ENCODE measurements at regions of chr7 and their contacts with region 1.

Region 1: GRCh38 chr7:151759591-151760042 is 117.3 kb downstream of the PRKAG2 start:
- DNase-seq: peak; percentile 92
- H3K4me3 ChIP-seq: no peak overlapping the region
- H3K27ac ChIP-seq: no peak overlapping the region
- H3K4me1 ChIP-seq: peaks cover 20 to 21% of the 10 kb centered on the region in 2 experiments; a peak in 3 of 4 replicates
- H3K27me3 ChIP-seq: peaks cover 13% of the 10 kb centered on the region; the same call in 1 of the 2 replicates
- CTCF ChIP-seq: peak; percentile 99
- EP300 ChIP-seq: no peak
- RAD21 ChIP-seq: peak; percentile 99

Region 2: DNA sequence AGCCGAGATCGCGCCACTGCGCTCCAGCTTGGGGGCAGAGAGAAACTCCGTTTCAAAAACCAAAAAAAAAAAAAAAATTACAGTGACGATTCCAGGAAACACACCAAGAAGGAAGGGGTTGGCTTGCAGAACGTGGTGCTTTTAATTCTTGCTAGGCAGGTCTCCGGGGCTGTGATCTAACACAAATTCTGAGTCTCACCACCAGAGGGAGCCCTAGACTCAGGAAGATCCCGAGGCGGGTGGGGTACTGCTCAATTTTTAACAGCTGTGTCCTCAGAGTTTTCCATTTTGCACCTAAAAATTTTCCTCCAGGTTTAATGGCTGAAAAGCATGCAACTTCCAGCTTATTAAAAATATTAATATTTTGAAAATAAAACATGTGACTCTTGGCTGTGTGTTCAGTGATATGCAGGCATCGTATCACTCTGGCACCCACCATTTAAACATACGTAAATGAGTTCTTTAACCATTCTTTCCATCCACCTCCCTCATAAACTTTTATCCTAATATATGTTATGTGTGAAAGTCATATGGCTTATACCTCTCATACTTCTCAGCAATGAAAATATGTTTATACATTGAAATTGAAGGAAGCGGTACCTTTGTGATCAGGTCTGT is 444.5 kb before region 1 on chr7:
- CTCF ChIA-PET with region 1: interaction called, 28 read pairs
- POLR2A ChIA-PET with region 1: no interaction called
- DNase-seq: peak; percentile 90
- H3K4me3 ChIP-seq: no peak overlapping the region
- H3K27ac ChIP-seq: no peak overlapping the region
- H3K4me1 ChIP-seq: no peaks in the 10 kb centered on the region
- H3K27me3 ChIP-seq: no peaks in the 10 kb centered on the region
- CTCF ChIP-seq: peak; percentile 97
- EP300 ChIP-seq: no peak
- RAD21 ChIP-seq: peak; percentile 90

Region 3: GRCh38 chr7:151459726-151460473 is 299.7 kb before region 1 on chr7:
- CTCF ChIA-PET with region 1: interaction called, 11 read pairs
- POLR2A ChIA-PET with region 1: no interaction called
- DNase-seq: peak; percentile 77
- H3K4me3 ChIP-seq: peak overlapping the region; percentile 23 to 42; a peak in 3 of 4 replicates
- H3K27ac ChIP-seq: peak overlapping the region; percentile 44 to 54; a peak in 3 of 4 replicates
- H3K4me1 ChIP-seq: peaks cover 0 to 14% of the 10 kb centered on the region in 2 experiments; a peak in 1 of 4 replicates
- H3K27me3 ChIP-seq: no peaks in the 10 kb centered on the region
- CTCF ChIP-seq: peak; percentile 44
- EP300 ChIP-seq: peak in 1 of 2 experiments; percentile 31; a peak in 1 of 4 replicates
- RAD21 ChIP-seq: peak; percentile 53

Region 4: GRCh38 chr7:151626422-151627115 is 133.0 kb before region 1 on chr7:
- CTCF ChIA-PET with region 1: interaction called, 203 read pairs
- POLR2A ChIA-PET with region 1: no interaction called
- DNase-seq: peak; percentile 56
- H3K4me3 ChIP-seq: no peak overlapping the region
- H3K27ac ChIP-seq: no peak overlapping the region
- H3K4me1 ChIP-seq: peaks cover 9 to 15% of the 10 kb centered on the region in 2 experiments; a peak in 2 of 4 replicates
- H3K27me3 ChIP-seq: no peaks in the 10 kb centered on the region
- CTCF ChIP-seq: peak; percentile 62
- EP300 ChIP-seq: no peak
- RAD21 ChIP-seq: peak; percentile 76

Region 5: GRCh38 chr7:151665368-151665767 is 94.2 kb before region 1 on chr7:
- CTCF ChIA-PET with region 1: interaction called, 19 read pairs
- POLR2A ChIA-PET with region 1: no interaction called
- DNase-seq: no peak
- H3K4me3 ChIP-seq: no peak overlapping the region
- H3K27ac ChIP-seq: peak overlapping the region in 1 of 2 experiments; percentile 26; a peak in 1 of 4 replicates
- H3K4me1 ChIP-seq: peaks cover 0 to 4% of the 10 kb centered on the region in 2 experiments; a peak in 1 of 4 replicates
- H3K27me3 ChIP-seq: no peaks in the 10 kb centered on the region
- CTCF ChIP-seq: no peak
- EP300 ChIP-seq: no peak; a peak in 1 of 4 replicates
- RAD21 ChIP-seq: no peak

Region 6: GRCh38 chr7:151736403-151736909 is 23.2 kb before region 1 on chr7:
- CTCF ChIA-PET with region 1: interaction called, 100 read pairs
- POLR2A ChIA-PET with region 1: no interaction called
- DNase-seq: peak; percentile 76
- H3K4me3 ChIP-seq: peak overlapping the region; percentile 27 to 48; a peak in 3 of 4 replicates
- H3K27ac ChIP-seq: peak overlapping the region; percentile 39 to 76; a peak in 3 of 4 replicates
- H3K4me1 ChIP-seq: peaks cover 6 to 14% of the 10 kb centered on the region in 2 experiments; a peak in 3 of 4 replicates
- H3K27me3 ChIP-seq: no peaks in the 10 kb centered on the region
- CTCF ChIP-seq: peak; percentile 48
- EP300 ChIP-seq: peak in 1 of 2 experiments; percentile 86; a peak in 2 of 4 replicates
- RAD21 ChIP-seq: peak; percentile 42